MCF 10A (cell line): ENCODE measurements at regions of chr4 and their contacts with region 1.

Region 1: DNA sequence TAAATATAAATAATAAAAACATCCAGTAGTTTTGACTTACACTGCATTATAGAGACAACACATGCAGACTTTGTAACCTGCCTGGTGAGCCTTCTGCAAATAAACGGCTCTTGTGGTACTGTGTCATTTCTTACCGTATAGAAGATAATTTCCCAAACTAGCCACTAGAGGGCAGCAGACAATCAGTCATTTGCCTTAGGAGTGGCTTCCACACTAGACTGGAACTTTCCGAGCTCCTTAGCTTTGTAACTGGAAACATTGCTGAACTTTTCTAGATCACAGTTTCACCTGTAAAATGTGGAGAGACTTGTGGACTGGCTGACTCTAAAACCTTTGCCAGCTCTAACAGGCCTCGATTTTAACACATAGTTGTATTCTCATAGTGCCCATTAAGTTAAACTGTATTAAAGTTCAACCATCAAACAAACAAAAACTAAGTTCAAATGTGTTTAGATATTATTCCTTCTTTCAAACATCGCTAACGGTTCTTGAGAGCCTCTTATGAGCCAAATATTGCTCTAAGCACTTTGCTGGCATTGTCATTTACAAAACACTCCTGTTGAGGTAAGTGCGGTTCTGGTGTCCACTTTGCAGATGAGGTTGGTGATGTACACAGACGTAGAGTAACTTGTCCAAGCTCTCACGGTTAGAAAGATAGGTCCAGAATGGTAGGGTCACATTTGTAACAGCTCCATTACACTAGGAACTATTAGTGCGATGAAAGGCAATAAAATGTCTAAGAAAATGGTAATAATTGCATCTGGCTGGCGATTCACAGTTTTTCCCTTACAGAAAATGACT is 345.5 kb downstream of the ANK2 start:
- DNase-seq: peak; percentile 90
- H3K4me3 Mint-ChIP-seq: no peak overlapping the region
- H3K27ac Mint-ChIP-seq: peak overlapping the region; percentile 90
- H3K4me1 Mint-ChIP-seq: no peaks in the 10 kb centered on the region
- H3K27me3 Mint-ChIP-seq: no peaks in the 10 kb centered on the region
- CTCF ChIP-seq: peak; percentile 76

Region 2: DNA sequence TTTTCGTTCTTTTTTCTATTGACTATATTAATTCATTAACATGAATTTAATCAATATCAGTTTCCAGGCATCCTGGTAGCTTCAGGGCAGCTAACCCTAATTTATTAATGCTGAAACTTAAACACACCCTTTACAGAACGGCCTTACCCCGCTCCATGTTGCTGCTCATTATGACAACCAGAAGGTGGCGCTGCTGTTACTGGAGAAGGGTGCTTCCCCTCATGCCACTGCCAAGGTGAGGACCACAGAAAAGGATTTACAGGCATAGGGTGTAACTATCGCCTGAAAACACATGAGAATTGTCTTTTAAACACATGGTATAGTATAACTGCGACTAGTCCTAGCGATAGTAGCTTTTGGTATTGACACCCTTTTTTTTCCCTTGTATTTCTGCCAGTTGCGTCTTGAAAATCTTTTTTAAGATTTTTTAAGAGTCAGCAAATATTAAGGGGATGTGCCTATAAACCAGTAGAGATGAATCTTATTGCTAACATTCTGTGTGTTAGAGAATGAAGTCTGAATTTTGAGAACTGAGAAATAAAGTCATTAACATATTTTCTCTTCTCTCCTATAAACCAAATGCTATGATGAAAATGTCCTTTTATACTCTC is 116.5 kb before region 1 on chr4:
- CTCF ChIA-PET with region 1: no interaction called
- POLR2A ChIA-PET with region 1: no interaction called
- intact Hi-C with region 1: loop called (anchors 1 kb)
- DNase-seq: peak; percentile 90
- H3K4me3 Mint-ChIP-seq: no peak overlapping the region
- H3K27ac Mint-ChIP-seq: no peak overlapping the region
- H3K4me1 Mint-ChIP-seq: no peaks in the 10 kb centered on the region
- H3K27me3 Mint-ChIP-seq: no peaks in the 10 kb centered on the region
- CTCF ChIP-seq: peak; percentile 80

Region 3: DNA sequence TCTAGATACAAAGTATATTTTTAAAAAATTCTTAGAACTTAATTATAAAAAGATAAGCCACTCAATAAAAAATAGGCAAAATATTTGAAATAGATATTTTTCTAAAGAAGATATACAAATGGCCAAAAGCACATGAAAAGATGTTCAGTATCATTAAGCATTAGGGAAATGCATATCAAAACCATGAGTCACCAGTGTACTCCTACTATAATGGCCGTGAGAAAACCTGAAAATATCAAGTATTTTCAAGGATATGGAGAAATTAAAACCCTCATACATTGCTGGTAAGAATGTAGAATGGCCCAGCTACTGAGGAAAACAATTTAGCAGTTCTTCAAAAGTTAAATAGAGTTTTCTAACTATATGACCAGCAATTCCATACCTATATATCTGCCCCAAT is 28.7 kb after region 1 on chr4:
- CTCF ChIA-PET with region 1: no interaction called
- POLR2A ChIA-PET with region 1: no interaction called
- intact Hi-C with region 1: no loop called
- DNase-seq: no peak
- H3K4me3 Mint-ChIP-seq: no peak overlapping the region
- H3K27ac Mint-ChIP-seq: no peak overlapping the region
- H3K4me1 Mint-ChIP-seq: no peaks in the 10 kb centered on the region
- H3K27me3 Mint-ChIP-seq: no peaks in the 10 kb centered on the region
- CTCF ChIP-seq: no peak

Region 4: DNA sequence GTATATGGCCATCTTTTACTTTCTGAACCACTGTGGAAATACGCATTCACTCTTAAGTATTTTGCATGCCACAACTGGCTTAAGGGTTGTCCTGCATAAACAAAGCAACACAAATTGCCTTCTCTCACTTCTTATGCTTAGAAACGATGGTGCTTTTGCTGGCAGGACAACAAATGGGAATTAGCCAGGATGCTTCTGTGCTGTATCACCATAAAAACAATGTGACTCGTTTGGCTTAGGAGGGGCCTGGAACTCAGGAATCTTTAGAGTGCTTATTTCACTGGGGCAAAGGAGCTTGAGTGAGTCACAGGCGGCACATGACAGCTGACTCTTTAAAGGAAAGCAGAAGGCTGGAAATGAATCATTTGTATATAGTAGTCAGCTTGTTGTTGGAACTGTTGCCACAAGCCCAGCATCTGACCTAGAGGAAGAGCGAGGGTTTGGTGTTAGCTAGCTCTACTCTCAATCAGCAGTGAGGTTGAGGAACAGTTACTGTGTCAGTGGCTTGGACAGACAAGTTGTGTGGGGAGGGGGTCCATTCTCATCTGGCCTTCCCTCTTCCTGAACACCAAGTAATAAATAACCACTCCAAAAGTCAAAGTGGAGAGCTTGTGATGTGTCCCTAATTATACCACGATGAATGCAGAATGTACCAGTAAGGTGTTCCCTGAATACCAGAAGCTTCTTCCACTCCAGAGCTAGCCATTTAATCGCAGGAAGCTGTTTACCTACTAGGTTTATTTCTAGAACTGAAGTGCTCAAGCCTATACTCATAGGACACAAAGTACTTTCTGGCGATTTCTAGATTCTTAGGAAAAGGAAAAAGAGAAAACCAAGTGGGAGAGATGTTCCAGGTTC is 73.5 kb after region 1 on chr4:
- CTCF ChIA-PET with region 1: interaction called, 4 read pairs
- POLR2A ChIA-PET with region 1: interaction called, 13 read pairs
- intact Hi-C with region 1: loop called (anchors 5 kb)
- DNase-seq: peak; percentile 98
- H3K4me3 Mint-ChIP-seq: peak overlapping the region; percentile 66
- H3K27ac Mint-ChIP-seq: peak overlapping the region; percentile 73
- H3K4me1 Mint-ChIP-seq: peaks cover 37% of the 10 kb centered on the region
- H3K27me3 Mint-ChIP-seq: no peaks in the 10 kb centered on the region
- CTCF ChIP-seq: no peak

Region 5: DNA sequence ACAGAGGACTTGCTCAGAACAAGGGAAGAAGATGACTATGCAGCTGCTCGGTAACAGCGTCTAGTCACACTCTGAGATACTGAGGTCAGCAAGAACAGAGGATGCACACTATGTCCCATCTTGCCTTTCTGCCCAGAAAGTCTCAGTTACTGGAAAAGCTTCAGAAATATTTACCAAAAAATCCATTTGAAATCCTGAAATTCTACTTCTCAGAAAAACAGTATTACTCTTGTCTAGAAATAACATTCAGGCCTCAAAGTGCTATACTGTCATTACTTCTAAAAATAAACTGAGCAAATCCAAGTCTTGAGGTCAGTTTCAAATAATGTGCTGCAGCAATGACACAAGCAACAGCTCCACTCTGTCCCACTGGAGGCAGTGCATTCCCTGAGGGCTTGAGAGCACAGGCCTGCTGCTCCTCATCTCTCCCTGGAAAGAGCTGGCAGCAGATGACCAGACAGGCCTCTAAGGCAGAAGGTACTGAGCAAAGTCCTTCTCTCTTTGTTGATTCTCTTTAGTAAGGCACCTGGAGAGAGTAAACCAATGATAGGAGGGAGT is 289.7 kb after region 1 on chr4:
- CTCF ChIA-PET with region 1: no interaction called
- POLR2A ChIA-PET with region 1: no interaction called
- intact Hi-C with region 1: loop called (anchors 2 kb)
- DNase-seq: peak; percentile 30
- H3K4me3 Mint-ChIP-seq: no peak overlapping the region
- H3K27ac Mint-ChIP-seq: no peak overlapping the region
- H3K4me1 Mint-ChIP-seq: peaks cover 8% of the 10 kb centered on the region
- H3K27me3 Mint-ChIP-seq: no peaks in the 10 kb centered on the region
- CTCF ChIP-seq: no peak

Region 6: DNA sequence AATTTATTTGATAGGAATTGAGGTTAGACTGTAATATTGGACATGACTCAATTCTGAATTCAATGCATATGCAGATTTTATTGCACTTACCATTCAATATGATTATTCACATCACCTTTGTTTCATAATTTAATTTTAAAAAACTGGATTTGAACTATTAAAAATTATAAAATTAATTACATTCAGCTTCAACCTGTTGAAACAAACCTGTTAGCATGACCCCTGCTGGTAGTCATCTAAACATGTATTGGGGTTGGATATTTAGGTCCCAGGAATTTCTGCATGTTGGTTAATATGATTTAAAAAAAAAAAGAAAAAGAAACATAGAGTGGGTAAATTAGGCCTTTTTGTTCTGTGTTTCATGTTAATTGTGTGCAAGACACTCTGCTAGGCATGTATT is 498.6 kb after region 1 on chr4:
- CTCF ChIA-PET with region 1: no interaction called
- POLR2A ChIA-PET with region 1: no interaction called
- intact Hi-C with region 1: loop called (anchors 5 kb)
- DNase-seq: peak; percentile 36
- H3K4me3 Mint-ChIP-seq: no peak overlapping the region
- H3K27ac Mint-ChIP-seq: no peak overlapping the region
- H3K4me1 Mint-ChIP-seq: no peaks in the 10 kb centered on the region
- H3K27me3 Mint-ChIP-seq: no peaks in the 10 kb centered on the region
- CTCF ChIP-seq: peak; percentile 24

Region 7: DNA sequence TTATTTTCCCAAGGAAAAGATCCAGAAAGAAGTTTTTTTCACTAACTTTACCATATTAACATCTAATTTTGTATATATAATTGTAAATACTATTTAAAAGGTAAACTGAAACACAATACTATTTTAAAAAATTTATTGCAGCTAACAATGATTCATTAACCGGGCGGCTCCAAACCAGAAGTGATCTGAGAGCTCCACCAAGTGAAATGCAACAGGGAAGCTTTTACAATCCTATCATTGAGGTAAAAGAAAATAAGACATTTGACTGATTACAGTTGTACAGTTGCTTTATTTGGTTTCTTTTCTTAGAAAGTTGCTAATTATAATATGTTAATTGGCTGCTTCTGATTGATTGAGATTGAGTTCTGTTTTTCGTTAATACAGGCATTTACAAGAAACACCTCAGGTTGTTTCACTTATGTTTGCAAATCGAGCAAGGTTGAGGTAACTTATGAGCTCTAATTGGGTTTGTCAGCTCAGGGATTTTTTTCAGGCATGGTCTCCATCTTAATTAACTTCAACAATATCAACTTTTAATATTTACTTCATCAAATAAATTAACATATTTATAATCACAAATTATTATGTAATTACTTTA is 983.5 kb after region 1 on chr4:
- CTCF ChIA-PET with region 1: interaction called, 38 read pairs
- POLR2A ChIA-PET with region 1: interaction called, 3 read pairs
- intact Hi-C with region 1: loop called (anchors 1 kb)
- DNase-seq: peak; percentile 55
- H3K4me3 Mint-ChIP-seq: no peak overlapping the region
- H3K27ac Mint-ChIP-seq: no peak overlapping the region
- H3K4me1 Mint-ChIP-seq: no peaks in the 10 kb centered on the region
- H3K27me3 Mint-ChIP-seq: no peaks in the 10 kb centered on the region
- CTCF ChIP-seq: peak; percentile 70